Calu3 (cell line): ENCODE measurements at regions of chr17 and their contacts with region 1.

Region 1: DNA sequence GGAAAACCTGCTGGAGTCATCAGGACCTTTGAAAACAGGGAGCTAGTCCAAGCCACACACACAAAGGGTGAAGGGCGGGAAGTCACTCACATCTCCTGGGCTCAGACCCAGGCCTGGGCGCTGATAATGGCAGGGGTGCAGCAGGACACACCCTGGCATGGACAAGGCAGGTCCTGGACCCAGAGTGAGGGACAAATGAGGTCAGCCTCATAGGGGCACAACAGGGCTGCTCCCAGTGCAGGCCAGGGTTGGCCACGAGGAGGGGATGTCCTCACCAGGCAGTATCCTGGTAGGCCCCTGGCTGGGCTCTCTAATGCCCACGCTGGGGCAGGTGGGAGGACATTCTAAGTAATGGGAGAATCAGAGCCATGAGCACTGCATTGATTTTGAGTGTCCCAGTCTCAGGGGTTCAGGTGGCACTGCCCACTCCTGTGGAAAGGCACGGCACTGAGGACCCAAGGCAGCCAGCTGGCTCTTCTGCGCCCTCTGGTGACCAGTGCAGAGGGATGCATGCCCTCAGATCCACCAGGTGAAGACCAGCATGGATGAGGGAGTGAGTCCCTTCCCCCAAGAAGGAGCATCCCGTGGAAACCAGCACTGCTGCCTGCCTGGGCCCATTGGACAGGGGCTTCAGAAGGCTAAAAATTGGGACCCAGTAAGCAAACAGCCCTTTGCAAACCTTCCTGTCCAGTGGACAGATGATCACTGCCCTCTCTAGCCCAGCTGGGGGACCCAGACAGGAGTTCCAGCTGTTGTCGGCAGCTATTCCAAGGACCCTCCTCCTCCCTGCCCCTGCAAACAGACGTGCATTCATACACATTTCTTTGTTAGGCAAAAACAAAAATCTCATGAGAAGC is 23.4 kb upstream of the SREBF1 start:
- DNase-seq: peak; percentile 64
- H3K4me3 Mint-ChIP-seq: no peak overlapping the region
- H3K27ac Mint-ChIP-seq: no peak overlapping the region
- H3K4me1 Mint-ChIP-seq: peaks cover 9% of the 10 kb centered on the region
- H3K27me3 Mint-ChIP-seq: no peaks in the 10 kb centered on the region
- CTCF ChIP-seq: peak; percentile 73

Region 2: DNA sequence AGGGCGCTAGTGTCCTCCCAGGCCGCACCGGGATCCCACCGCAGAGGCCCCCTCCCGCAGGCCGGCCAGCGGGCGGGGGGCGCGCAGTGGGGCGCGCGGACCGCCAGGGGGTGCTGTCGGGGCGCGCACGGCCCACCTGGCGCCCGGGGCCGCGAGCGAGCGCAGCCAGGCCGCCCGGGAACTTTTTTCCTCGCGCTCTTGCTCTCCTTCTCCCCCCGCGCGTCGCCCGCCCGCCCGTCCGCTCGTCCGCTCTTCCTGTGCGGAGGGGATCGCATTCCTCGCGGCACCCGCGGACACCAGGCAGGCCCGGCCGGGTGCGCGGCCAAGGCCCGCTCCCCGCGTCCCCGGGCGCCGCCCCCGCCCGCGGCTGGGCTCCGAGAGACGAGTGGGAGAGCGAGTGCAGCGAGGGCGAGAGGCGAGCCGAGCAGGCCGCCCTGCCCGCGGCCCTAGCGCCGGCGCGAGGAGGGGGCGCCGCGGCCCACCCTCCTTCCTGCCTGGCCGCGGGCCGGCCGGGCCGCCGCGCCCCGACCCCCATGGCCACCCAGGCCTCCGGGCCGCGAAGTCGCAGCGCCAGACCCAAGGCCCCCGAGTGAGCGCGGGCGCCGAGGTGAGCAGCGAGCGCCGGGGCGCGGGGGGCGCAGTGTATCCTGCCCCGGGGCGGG is 178.8 kb before region 1 on chr17 and contains the start of gene RAI1:
- CTCF ChIA-PET with region 1: no interaction called
- intact Hi-C with region 1: loop called (anchors 5 kb)
- DNase-seq: peak; percentile 76
- H3K4me3 Mint-ChIP-seq: peak within 1 kb of the TSS; percentile 82
- H3K27ac Mint-ChIP-seq: peak within 1 kb of the TSS; percentile 27
- H3K4me1 Mint-ChIP-seq: peaks cover 46% of the 10 kb centered on the region
- H3K27me3 Mint-ChIP-seq: no peaks in the 10 kb centered on the region
- CTCF ChIP-seq: peak; percentile 41
- total RNA-seq, gene RAI1: 38.0 and 43.4 TPM in 2 replicates

Region 3: DNA sequence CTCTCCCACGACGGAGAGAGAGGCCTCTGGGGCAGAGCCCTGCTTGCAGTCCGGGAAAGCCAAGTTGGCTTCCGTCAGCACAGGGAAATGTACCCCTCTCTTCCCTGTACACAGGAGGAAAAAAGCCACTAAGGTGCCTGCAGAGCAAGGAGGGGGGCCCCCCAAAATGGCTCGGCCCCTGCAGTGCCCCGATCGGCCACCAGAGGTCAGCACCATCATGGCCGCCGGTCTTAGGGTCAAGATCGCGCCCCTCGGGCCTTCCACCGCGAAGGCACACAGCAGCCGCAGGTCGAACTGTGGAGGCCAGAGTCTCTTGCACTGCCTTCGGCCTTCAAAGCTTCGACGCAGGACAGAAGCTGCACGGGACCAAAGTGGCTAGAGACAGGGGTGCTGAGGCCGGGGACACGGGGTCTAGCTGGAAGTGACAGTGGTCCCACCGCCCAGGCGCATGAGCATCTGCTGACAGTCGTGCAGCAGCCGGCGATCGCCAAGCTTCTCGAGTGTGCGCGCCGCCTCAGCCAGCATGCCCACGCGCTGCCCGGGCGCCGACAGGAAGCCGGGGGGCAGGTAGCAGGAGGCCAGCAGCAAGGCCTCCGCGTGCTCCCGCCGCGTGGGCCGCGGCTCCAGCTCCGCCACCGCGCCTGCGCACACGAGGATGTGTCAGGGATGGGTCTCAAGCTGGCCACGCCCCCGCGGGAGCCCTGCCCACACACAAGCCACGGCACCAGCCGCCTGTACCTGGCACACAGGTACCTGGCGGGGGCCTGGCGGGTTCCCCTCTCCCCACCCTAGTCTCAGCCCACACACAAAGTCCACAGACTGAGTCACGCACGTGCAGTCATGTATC is 47.7 kb before region 1 on chr17:
- CTCF ChIA-PET with region 1: interaction called, 3 read pairs
- intact Hi-C with region 1: loop called (anchors 10 kb)
- DNase-seq: peak; percentile 62
- H3K4me3 Mint-ChIP-seq: no peak overlapping the region
- H3K27ac Mint-ChIP-seq: no peak overlapping the region
- H3K4me1 Mint-ChIP-seq: no peaks in the 10 kb centered on the region
- H3K27me3 Mint-ChIP-seq: no peaks in the 10 kb centered on the region
- CTCF ChIP-seq: peak; percentile 96